Left cardiac atrium (tissue), 4 donors: ENCODE measurements at regions of chr11 and their contacts with region 1.

Region 1: GRCh38 chr11:122020902-122021301 is 95.1 kb downstream of the BLID start:
- DNase-seq: no peak
- ATAC-seq: no peak

Region 2: DNA sequence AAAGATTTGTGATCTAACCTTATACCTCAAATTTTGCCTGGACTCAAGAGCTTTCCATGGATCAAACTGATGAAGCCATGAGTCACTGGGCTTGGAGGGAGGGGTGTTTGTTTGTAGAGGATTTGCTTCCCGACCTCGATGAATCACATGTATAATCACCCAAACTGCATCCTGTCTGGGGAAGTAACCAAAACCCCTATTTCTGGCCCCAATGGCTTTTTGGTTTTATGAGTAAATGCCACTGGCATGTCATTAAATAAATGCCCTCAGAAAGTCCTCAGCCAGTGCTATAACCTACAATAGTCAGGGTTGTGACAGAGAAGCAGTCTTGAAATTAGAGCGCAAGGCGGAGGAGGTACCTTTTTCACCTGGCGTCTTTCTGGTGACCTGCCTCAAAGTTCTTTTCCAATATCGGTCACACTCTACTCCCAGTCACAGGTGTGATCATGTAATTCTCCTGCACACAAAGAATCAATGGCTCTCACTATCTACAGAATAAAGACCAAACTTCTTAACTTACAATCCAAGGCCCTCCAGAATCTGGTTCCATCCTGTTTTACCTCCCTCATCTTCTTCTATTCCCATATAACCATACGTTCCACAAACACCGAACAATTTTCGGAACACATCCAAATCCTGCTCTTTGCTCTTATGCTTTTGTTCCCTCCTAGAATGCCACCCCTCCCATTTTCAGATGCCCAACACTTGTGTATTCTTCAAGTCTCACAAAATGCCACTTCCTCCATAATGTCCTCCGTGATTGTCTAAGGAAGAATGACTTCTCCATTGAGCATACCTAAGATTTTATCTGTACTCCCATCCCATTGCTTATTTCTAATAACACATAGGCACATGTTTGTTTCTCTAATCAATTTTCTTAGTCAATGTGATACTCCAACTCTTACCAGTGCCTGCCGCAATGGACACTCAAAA is 176.4 kb after region 1 on chr11:
- intact Hi-C with region 1: loop called (anchors 5 to 10 kb)
- DNase-seq: peak; percentile 59
- ATAC-seq: peak; percentile 53 to 91